B cell (primary cell): ENCODE measurements at regions of chr13 and their contacts with region 1.

Region 1: GRCh38 chr13:27251166-27252091 is at the start of gene RPL21:
- DNase-seq: peak; percentile 99
- ATAC-seq: peak; percentile 91
- H3K4me3 ChIP-seq: peak within 1 kb of the TSS; percentile 85 to 100 (median 95)
- H3K4me3 Mint-ChIP-seq: peak within 1 kb of the TSS; percentile 95
- H3K27ac ChIP-seq: peak within 1 kb of the TSS; percentile 93 to 96
- H3K27ac Mint-ChIP-seq: peak within 1 kb of the TSS; percentile 100
- H3K4me1 ChIP-seq: peaks cover 16 to 30% of the 10 kb centered on the region in 2 donors
- H3K4me1 Mint-ChIP-seq: peaks cover 48% of the 10 kb centered on the region
- H3K27me3 ChIP-seq: no peaks in the 10 kb centered on the region
- H3K27me3 Mint-ChIP-seq: no peaks in the 10 kb centered on the region
- CTCF ChIP-seq: no peak
- total RNA-seq, gene RPL21: 1,840 and 1,937 TPM in 2 replicates

Region 2: GRCh38 chr13:25301347-25302047 is 1949.9 kb before region 1 on chr13 and contains the start of gene NUP58:
- CTCF ChIA-PET with region 1: no interaction called
- POLR2A ChIA-PET with region 1: no interaction called
- intact Hi-C with region 1: loop called (anchors 5 kb)
- DNase-seq: peak; percentile 97
- ATAC-seq: peak; percentile 99
- H3K4me3 ChIP-seq: peak within 1 kb of the TSS; percentile 69 to 94 (median 86)
- H3K4me3 Mint-ChIP-seq: peak within 1 kb of the TSS; percentile 87
- H3K27ac ChIP-seq: peak within 1 kb of the TSS; percentile 90 to 97
- H3K27ac Mint-ChIP-seq: peak within 1 kb of the TSS; percentile 95
- H3K4me1 ChIP-seq: peaks cover 13 to 17% of the 10 kb centered on the region in 2 donors
- H3K4me1 Mint-ChIP-seq: peaks cover 33% of the 10 kb centered on the region
- H3K27me3 ChIP-seq: peaks cover 0 to 20% (median 15%) of the 10 kb centered on the region in 4 experiments
- H3K27me3 Mint-ChIP-seq: peaks cover 17% of the 10 kb centered on the region
- CTCF ChIP-seq: no peak
- total RNA-seq, gene NUP58: 41.0 and 41.7 TPM in 2 replicates

Region 3: DNA sequence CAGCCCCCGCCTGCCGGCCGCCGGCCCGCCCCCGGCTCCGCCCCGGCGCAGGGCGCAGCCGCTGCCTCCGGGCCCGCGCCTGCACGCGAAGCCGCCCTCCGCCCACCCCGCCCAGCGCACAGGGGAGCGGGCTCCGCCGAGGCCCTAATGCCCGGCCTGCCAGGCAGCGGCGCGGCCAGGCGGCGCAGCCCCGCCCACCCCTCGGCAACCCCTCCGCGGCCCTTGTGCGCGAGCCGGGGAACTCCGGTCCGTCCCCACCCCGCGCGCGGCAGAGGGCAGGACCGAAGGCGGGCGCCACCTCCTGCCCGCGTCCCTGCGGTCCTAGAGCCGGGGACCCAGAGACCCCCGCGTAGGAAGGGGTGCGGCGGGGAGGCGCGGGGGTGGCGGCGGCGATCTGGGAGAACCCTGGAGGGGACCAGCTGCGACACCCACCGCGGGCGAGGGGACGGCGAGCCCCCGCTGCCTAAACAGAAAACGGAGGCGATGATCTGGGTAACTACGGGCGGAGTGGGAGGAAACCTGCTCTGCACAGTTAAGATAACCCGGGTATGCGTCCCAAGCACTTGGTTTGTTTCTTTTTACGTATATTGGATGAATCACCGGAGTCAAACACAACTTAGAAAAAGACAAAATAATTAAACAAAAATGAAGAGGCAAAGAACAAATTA is 79.5 kb before region 1 on chr13:
- CTCF ChIA-PET with region 1: interaction called, 4 read pairs
- POLR2A ChIA-PET with region 1: interaction called, 6 read pairs
- intact Hi-C with region 1: loop called (anchors 1 kb)
- DNase-seq: peak; percentile 95
- ATAC-seq: peak; percentile 88
- H3K4me3 ChIP-seq: peak overlapping the region; percentile 61 to 86 (median 83)
- H3K4me3 Mint-ChIP-seq: peak overlapping the region; percentile 86
- H3K27ac ChIP-seq: peak overlapping the region; percentile 92 to 94
- H3K27ac Mint-ChIP-seq: peak overlapping the region; percentile 95
- H3K4me1 ChIP-seq: peaks cover 43 to 54% of the 10 kb centered on the region in 2 donors
- H3K4me1 Mint-ChIP-seq: peaks cover 67% of the 10 kb centered on the region
- H3K27me3 ChIP-seq: no peaks in the 10 kb centered on the region
- H3K27me3 Mint-ChIP-seq: no peaks in the 10 kb centered on the region
- CTCF ChIP-seq: no peak

Region 4: GRCh38 chr13:27270594-27271520 is 19.4 kb after region 1 on chr13 and contains the start of gene RASL11A:
- CTCF ChIA-PET with region 1: interaction called, 4 read pairs
- POLR2A ChIA-PET with region 1: interaction called, 5 read pairs
- intact Hi-C with region 1: loop called (anchors 1 kb)
- DNase-seq: peak; percentile 85
- ATAC-seq: peak; percentile 89
- H3K4me3 ChIP-seq: peak within 1 kb of the TSS; percentile 46 to 95 (median 78)
- H3K4me3 Mint-ChIP-seq: peak within 1 kb of the TSS; percentile 89
- H3K27ac ChIP-seq: peak within 1 kb of the TSS; percentile 28 to 39
- H3K27ac Mint-ChIP-seq: peak within 1 kb of the TSS; percentile 72
- H3K4me1 ChIP-seq: peaks cover 6 to 18% of the 10 kb centered on the region in 2 donors
- H3K4me1 Mint-ChIP-seq: peaks cover 33% of the 10 kb centered on the region
- H3K27me3 ChIP-seq: peaks cover 0 to 5% (median 2%) of the 10 kb centered on the region in 4 experiments
- H3K27me3 Mint-ChIP-seq: peaks cover 9% of the 10 kb centered on the region
- CTCF ChIP-seq: peak; percentile 99
- total RNA-seq, gene RASL11A: 0.89 and 1.0 TPM in 2 replicates

Region 5: DNA sequence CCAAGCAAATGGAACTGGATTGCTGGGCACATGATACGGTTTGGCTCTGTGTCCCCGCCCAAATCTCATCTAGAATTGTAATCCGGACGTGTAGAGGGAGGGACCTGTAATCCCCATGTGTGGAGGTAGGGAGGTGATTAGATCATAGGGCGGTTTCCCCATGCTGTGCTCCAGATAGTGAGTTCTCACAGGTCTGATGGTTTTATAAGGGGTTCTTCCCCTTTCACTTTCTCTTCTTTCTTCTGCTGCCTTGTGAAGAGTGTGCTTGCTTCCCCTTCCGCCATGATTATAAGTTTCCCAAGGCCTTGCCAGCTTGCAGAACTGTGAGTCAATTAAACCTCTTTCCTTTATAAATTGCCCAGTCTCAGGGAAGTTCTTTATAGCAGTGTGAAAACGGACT is 231.6 kb after region 1 on chr13:
- CTCF ChIA-PET with region 1: no interaction called
- POLR2A ChIA-PET with region 1: no interaction called
- intact Hi-C with region 1: loop called (anchors 1 kb)
- DNase-seq: peak; percentile 90
- ATAC-seq: peak; percentile 99
- H3K4me3 ChIP-seq: peak overlapping the region in 4 of 5 experiments; percentile 11 to 43 (median 30)
- H3K4me3 Mint-ChIP-seq: peak overlapping the region; percentile 81
- H3K27ac ChIP-seq: peak overlapping the region; percentile 71 to 82
- H3K27ac Mint-ChIP-seq: peak overlapping the region; percentile 93
- H3K4me1 ChIP-seq: peaks cover 37 to 45% of the 10 kb centered on the region in 2 donors
- H3K4me1 Mint-ChIP-seq: peaks cover 41% of the 10 kb centered on the region
- H3K27me3 ChIP-seq: no peaks in the 10 kb centered on the region
- H3K27me3 Mint-ChIP-seq: no peaks in the 10 kb centered on the region
- CTCF ChIP-seq: no peak

Region 6: DNA sequence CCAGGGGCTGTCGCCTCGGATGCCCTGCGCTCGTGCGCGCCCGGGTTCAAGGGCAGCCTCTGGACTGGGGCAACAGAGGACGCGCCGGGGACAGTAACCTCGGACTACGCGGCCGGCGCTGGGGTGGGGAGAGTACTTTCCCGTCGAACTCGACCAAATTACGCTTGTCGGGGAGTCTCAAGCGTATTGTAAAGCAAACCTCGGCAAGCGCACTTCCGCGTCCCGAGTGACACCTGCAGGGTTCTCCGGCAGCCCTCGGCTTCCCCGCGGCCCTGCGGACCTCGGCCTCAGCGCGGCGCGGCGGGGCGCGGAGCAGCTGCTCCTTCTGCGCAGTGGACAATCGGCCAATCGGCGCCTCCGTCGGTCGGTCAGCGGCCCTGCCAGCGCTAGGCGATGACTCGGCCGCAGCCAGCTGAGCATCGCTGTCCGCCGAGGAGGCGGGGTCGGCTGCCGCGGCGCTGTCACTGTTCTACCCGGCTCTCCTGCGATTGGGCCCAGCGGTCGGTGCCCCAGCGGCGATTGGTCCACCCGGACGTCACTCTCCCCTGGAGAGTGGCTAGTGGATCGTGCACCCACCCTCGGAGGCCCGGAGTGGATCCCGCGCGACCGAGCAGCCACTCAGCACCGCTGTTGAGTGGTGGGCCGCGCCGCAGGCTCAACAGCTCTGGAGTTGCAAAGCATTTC is 1467.3 kb after region 1 on chr13 and contains the start of gene SLC46A3:
- CTCF ChIA-PET with region 1: no interaction called
- POLR2A ChIA-PET with region 1: no interaction called
- intact Hi-C with region 1: loop called (anchors 5 kb)
- DNase-seq: peak; percentile 97
- ATAC-seq: peak; percentile 98
- H3K4me3 ChIP-seq: peak within 1 kb of the TSS; percentile 61 to 91 (median 87)
- H3K4me3 Mint-ChIP-seq: peak within 1 kb of the TSS; percentile 96
- H3K27ac ChIP-seq: peak within 1 kb of the TSS; percentile 84 to 89
- H3K27ac Mint-ChIP-seq: peak within 1 kb of the TSS; percentile 98
- H3K4me1 ChIP-seq: peaks cover 14 to 18% of the 10 kb centered on the region in 2 donors
- H3K4me1 Mint-ChIP-seq: peaks cover 24% of the 10 kb centered on the region
- H3K27me3 ChIP-seq: no peaks in the 10 kb centered on the region
- H3K27me3 Mint-ChIP-seq: no peaks in the 10 kb centered on the region
- CTCF ChIP-seq: peak; percentile 24
- total RNA-seq, gene SLC46A3: 12.4 and 13.1 TPM in 2 replicates